HCT116 (cell line): ENCODE measurements at regions of chr1 and their contacts with region 1.

Region 1: GRCh38 chr1:59296358-59297256 is at the start of gene FGGY:
- DNase-seq: peak; percentile 94
- ATAC-seq: peak; percentile 89
- H3K4me3 ChIP-seq: peak within 1 kb of the TSS; percentile 67 to 71
- H3K27ac ChIP-seq: peak within 1 kb of the TSS; percentile 85
- H3K4me1 ChIP-seq: peaks cover 23 to 48% of the 10 kb centered on the region in 2 experiments
- H3K27me3 ChIP-seq: no peaks in the 10 kb centered on the region
- CTCF ChIP-seq: no peak
- POLR2A ChIP-seq: peak; percentile 77
- RAD21 ChIP-seq: 0 out of 2 replicates have a peak, but pooled peaks have one; percentile 5
- total RNA-seq, gene FGGY: 10.6 TPM

Region 2: GRCh38 chr1:58816072-58816746 is 480.4 kb before region 1 on chr1:
- CTCF ChIA-PET with region 1: no interaction called
- POLR2A ChIA-PET with region 1: no interaction called
- RAD21 ChIA-PET with region 1: no interaction called
- intact Hi-C with region 1: loop called (anchors 10 kb)
- DNase-seq: peak; percentile 51
- ATAC-seq: peak; percentile 73
- H3K4me3 ChIP-seq: peak overlapping the region; percentile 53 to 63
- H3K27ac ChIP-seq: peak overlapping the region; percentile 80
- H3K4me1 ChIP-seq: peaks cover 22 to 44% of the 10 kb centered on the region in 2 experiments; a peak in 3 of 4 replicates
- H3K27me3 ChIP-seq: no peaks in the 10 kb centered on the region
- CTCF ChIP-seq: no peak
- POLR2A ChIP-seq: no peak
- RAD21 ChIP-seq: peak; percentile 54

Region 3: GRCh38 chr1:58919959-58920321 is 376.7 kb before region 1 on chr1:
- CTCF ChIA-PET with region 1: no interaction called
- POLR2A ChIA-PET with region 1: no interaction called
- RAD21 ChIA-PET with region 1: no interaction called
- intact Hi-C with region 1: loop called (anchors 10 kb)
- DNase-seq: no peak
- ATAC-seq: no peak
- H3K4me3 ChIP-seq: no peak overlapping the region
- H3K27ac ChIP-seq: no peak overlapping the region
- H3K4me1 ChIP-seq: no peaks in the 10 kb centered on the region
- H3K27me3 ChIP-seq: no peaks in the 10 kb centered on the region
- CTCF ChIP-seq: no peak
- POLR2A ChIP-seq: no peak
- RAD21 ChIP-seq: no peak

Region 4: GRCh38 chr1:59498640-59499039 is 202.0 kb after region 1 on chr1:
- CTCF ChIA-PET with region 1: no interaction called
- POLR2A ChIA-PET with region 1: no interaction called
- RAD21 ChIA-PET with region 1: no interaction called
- intact Hi-C with region 1: loop called (anchors 10 kb)
- DNase-seq: no peak
- ATAC-seq: no peak
- H3K4me3 ChIP-seq: no peak overlapping the region
- H3K27ac ChIP-seq: no peak overlapping the region
- H3K4me1 ChIP-seq: peaks cover 8 to 29% of the 10 kb centered on the region in 2 experiments; a peak in 3 of 4 replicates
- H3K27me3 ChIP-seq: no peaks in the 10 kb centered on the region
- CTCF ChIP-seq: no peak
- POLR2A ChIP-seq: no peak
- RAD21 ChIP-seq: no peak

Region 5: DNA sequence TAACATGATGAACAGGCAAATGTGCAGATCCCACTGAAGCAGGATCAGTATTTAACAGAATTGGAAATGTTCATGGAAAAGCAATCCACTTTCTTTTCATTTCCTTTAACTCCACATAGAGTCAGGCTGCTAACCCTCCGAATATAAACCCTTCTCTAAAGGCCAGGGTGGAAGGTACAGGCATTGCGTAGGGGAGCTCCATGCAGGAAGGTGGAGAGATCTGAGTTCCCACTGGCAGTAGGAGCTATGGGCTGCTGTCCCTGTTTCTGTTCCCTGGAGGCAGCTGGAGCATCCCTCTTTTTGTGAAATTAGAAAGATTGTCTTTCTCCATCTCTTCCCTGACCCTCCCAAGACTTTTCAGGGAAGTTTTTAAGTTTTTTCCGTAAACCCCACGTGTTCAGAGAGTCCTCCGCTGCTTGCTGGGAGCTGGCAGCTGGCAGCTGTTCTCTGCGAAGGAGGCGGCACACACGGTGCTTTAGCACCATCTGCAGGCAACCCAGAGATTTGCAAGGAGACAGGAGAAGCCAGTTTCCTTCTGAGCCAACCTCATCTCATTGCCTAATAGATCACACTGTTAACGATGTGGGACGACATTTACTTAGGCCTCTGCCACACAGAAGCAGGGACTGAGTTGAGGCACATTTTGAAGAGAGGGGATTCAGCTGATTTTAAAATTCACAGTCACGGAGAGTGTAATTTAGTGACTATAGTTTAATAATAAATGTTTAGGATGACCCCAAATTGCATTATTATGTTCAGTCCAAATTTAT is 462.7 kb after region 1 on chr1:
- CTCF ChIA-PET with region 1: no interaction called
- POLR2A ChIA-PET with region 1: no interaction called
- RAD21 ChIA-PET with region 1: no interaction called
- intact Hi-C with region 1: loop called (anchors 5 kb)
- DNase-seq: peak; percentile 59
- ATAC-seq: peak; percentile 96
- H3K4me3 ChIP-seq: 0 out of 4 replicates have a peak overlapping the region, but pooled peaks of 1 of the 2 experiments have one; percentile 7
- H3K27ac ChIP-seq: no peak overlapping the region
- H3K4me1 ChIP-seq: peaks cover 0 to 8% of the 10 kb centered on the region in 2 experiments; a peak in 2 of 4 replicates
- H3K27me3 ChIP-seq: no peaks in the 10 kb centered on the region
- CTCF ChIP-seq: peak; percentile 67 to 95 (median 92)
- POLR2A ChIP-seq: no peak
- RAD21 ChIP-seq: peak; percentile 99